ENCODE measurements at regions of chr12 and their contacts with region 1.

Region 1: DNA sequence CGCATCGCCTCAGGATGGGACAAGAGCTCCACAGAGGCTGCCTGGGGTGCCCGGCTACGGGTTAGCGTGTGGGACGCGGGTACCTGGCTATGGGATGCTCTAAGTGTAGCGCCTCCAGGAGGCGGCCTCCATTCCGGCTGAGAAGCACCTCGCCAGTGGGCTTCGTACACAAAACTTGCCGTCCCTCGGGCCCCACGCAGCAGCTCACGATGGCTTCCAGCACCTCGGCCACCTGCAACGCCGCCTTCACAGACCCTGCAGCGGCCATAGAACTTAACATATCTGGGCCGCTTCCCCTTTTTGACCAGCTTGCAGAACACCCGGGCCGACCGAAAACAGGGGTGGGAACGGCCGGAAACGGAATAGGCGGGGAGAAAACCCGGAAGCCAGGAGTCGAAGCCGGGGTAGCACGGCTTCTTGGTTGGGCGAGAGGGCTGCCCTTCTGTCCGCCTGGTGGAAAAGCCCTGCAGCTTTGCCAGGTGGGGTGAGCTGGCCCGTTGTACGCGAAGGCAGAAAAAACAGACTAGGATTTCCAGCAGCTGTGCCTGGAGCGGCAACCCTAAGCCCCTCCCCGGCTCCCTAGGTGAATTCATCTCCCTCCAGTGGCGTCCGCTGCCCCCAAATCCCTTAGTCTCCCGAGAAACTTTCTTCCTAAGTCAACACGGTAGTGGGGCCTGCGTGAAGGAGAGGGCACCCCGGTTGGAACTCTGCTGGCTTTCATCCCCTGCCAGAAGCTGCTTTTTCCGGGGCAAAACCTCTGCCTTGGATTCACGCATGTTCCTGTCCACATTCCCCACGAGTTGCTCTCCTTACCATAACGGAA is at the start of gene BBS10:
- DNase-seq: peak; percentile 86 to 92
- ATAC-seq: peak; percentile 99
- H3K4me3 ChIP-seq: peak within 1 kb of the TSS; percentile 67
- H3K27ac ChIP-seq: peak within 1 kb of the TSS; percentile 90 to 97
- H3K4me1 ChIP-seq: peaks cover 15% of the 10 kb centered on the region; the same call in 2 of the 3 replicates
- CTCF ChIP-seq: peak; percentile 64
- EP300 ChIP-seq: no peak
- POLR2A ChIP-seq: peak; percentile 87
- RAD21 ChIP-seq: peak; percentile 33 to 50
- polyA plus RNA-seq, gene BBS10: 11.6 and 15.1 TPM in 2 replicates

Region 2: GRCh38 chr12:75526655-75527511 is 821.4 kb before region 1 on chr12:
- CTCF ChIA-PET with region 1: interaction called, 15 read pairs
- POLR2A ChIA-PET with region 1: no interaction called
- DNase-seq: peak; percentile 48 to 70
- ATAC-seq: peak; percentile 80 to 86; a peak in 5 of 6 replicates
- H3K4me3 ChIP-seq: no peak overlapping the region
- H3K27ac ChIP-seq: peak overlapping the region; percentile 51 to 69; a peak in 5 of 6 replicates
- H3K4me1 ChIP-seq: peaks cover 10% of the 10 kb centered on the region
- CTCF ChIP-seq: peak; percentile 90
- EP300 ChIP-seq: no peak
- POLR2A ChIP-seq: no peak
- RAD21 ChIP-seq: peak; percentile 93 to 95

Region 3: GRCh38 chr12:76158518-76159321 is 189.6 kb before region 1 on chr12:
- CTCF ChIA-PET with region 1: interaction called, 17 read pairs
- POLR2A ChIA-PET with region 1: interaction called, 6 read pairs
- DNase-seq: peak; percentile 75 to 80
- ATAC-seq: peak; percentile 100
- H3K4me3 ChIP-seq: no peak overlapping the region
- H3K27ac ChIP-seq: peak overlapping the region in 1 of 2 experiments; percentile 72; a peak in 3 of 6 replicates
- H3K4me1 ChIP-seq: no peaks in the 10 kb centered on the region
- CTCF ChIP-seq: peak; percentile 75
- EP300 ChIP-seq: no peak
- POLR2A ChIP-seq: no peak
- RAD21 ChIP-seq: peak; percentile 76

Region 4: DNA sequence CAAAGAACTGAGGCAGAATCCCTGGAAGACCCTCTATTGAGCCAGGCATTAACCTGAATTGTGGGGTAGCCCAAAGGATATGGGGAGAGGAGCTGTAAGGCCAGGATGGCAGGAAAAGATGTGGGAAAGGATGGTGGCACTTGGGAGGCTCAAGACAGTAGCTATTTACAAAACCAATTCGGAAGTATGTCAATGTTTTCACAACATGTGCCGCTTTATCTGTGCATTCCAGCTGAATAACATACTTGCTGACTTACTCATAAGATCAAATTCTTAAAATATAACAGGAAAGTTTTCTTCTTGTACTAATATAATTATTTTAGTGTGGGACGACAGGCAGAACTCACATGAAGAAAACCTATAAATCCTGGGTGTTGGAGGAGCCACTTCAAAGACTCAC is 10.7 kb before region 1 on chr12:
- CTCF ChIA-PET with region 1: interaction called, 10 read pairs
- POLR2A ChIA-PET with region 1: no interaction called
- DNase-seq: no peak
- ATAC-seq: no peak
- H3K4me3 ChIP-seq: no peak overlapping the region
- H3K27ac ChIP-seq: no peak overlapping the region
- H3K4me1 ChIP-seq: no peaks in the 10 kb centered on the region; the same call in 2 of the 3 replicates
- CTCF ChIP-seq: no peak
- EP300 ChIP-seq: no peak
- POLR2A ChIP-seq: no peak
- RAD21 ChIP-seq: no peak

Region 5: DNA sequence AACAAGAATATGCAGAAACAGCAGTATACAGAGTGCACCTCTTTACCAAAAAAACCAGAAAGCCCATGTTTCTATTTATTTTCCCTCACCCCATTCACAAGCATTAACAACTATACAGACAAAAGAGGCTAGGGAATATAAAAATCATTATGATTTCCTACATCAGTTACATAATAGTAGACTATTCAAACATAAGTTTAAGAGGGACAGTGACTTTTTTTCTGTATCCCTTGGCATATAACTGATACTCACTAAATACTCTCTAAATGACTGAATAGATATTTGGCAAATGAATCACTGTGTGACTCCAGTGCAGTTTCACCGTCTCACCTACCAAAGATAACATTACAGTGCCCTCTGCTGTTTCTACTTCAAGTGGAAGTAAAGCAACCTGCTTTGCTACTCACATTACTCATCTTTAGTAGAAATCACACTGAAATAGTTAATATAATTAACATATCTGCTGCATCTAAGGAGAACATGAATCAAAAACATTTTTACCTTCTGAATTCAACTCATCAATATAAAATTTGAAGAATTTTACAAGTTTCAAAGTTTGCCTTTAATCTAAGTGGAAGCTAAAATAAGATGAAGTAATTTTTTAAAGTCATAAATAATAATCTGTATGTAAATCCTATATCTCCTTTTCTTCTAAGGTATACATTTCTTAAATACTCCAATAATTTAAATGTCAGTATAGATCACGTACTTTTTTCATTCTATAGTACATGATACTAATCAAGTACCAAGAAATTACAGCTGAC is 107.5 kb after region 1 on chr12:
- CTCF ChIA-PET with region 1: interaction called, 31 read pairs
- POLR2A ChIA-PET with region 1: interaction called, 10 read pairs
- DNase-seq: peak; percentile 49 to 91
- ATAC-seq: peak; percentile 95 to 98
- H3K4me3 ChIP-seq: peak overlapping the region; percentile 39
- H3K27ac ChIP-seq: peak overlapping the region; percentile 67 to 86
- H3K4me1 ChIP-seq: peaks cover 28% of the 10 kb centered on the region; the same call in 2 of the 3 replicates
- CTCF ChIP-seq: peak; percentile 89
- EP300 ChIP-seq: no peak
- POLR2A ChIP-seq: no peak
- RAD21 ChIP-seq: peak; percentile 91 to 95